Heart right ventricle (tissue), 16 donors: ENCODE measurements at regions of chr1 and their contacts with region 1.

Region 1: DNA sequence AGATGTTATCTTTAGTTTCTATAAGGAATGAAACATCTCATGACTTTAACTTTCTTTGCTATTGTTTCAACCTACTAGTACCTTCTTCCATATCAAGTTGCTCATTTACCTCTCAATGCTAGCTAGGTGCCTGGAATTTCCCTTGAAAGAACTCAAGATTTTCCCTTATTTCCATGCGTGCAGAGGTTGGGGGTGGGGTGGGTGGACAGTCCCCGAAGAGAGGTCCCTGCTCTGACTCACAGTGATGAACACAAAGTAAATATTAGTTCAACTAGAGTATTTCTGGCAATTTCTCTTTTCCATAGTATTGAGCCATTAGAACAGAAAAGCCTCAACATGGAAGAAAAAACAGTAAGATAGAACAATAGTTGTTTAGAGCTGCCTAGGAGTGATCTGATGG is 239.0 kb upstream of the ZP4 start:
- DNase-seq: no peak
- ATAC-seq: no peak
- H3K4me3 ChIP-seq: no peak overlapping the region
- H3K27ac ChIP-seq: no peak overlapping the region
- H3K4me1 ChIP-seq: no peaks in the 10 kb centered on the region
- H3K27me3 ChIP-seq: peaks cover 0 to 4% (median 0%) of the 10 kb centered on the region in 7 donors
- CTCF ChIP-seq: no peak

Region 2: GRCh38 chr1:238264951-238265350 is 135.3 kb after region 1 on chr1:
- intact Hi-C with region 1: loop called in 1 of 10 experiments (anchors 5 kb)
- DNase-seq: no peak
- ATAC-seq: no peak
- H3K4me3 ChIP-seq: no peak overlapping the region
- H3K27ac ChIP-seq: no peak overlapping the region
- H3K4me1 ChIP-seq: peaks cover 0 to 8% (median 0%) of the 10 kb centered on the region in 9 donors
- H3K27me3 ChIP-seq: no peaks in the 10 kb centered on the region
- CTCF ChIP-seq: no peak